Activated CD4-positive, alpha-beta T cell treated with anti-CD3 and anti-CD28 coated beads for 36 hours (primary cell): ENCODE measurements at regions of chr11 and their contacts with region 1.

Region 1: GRCh38 chr11:118689851-118690552 is 10.6 kb upstream of the TREH start:
- DNase-seq: peak; percentile 95
- ATAC-seq: peak; percentile 95
- H3K4me3 Mint-ChIP-seq: peak overlapping the region; percentile 65
- H3K27ac Mint-ChIP-seq: peak overlapping the region; percentile 84
- H3K4me1 Mint-ChIP-seq: peaks cover 46% of the 10 kb centered on the region
- H3K27me3 Mint-ChIP-seq: no peaks in the 10 kb centered on the region

Region 2: DNA sequence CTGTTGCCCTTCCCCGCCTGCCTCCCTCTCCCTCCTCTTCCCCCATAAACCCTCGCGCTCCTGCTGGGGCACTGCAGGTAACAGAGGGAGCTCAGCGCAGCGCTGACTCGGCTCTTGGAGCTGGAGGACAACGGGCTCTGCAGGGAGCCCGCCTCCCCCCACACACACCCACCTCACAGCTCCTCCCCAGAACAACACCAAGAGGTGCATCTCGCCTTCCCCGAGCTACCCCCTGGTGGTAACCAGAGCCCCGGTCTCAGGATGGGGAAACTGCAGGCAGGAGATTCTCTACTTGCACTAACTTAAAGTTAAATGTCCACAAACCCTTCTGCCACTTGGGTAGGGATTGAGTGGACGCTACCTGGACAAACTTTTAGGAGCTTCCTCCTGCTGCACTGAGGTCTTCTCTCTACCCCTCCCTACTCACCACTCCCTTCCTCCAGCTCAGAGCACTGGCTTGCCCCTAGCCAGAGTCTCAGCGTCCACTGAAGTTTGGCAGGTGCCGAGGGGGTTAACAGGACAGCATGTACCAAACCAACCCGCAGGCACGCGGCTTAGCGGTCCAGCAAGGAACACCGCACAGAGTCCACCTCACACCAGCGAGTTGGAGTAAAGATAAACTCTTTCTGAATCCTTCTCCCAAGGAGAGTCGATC is 533.3 kb before region 1 on chr11:
- CTCF ChIA-PET with region 1: no interaction called
- POLR2A ChIA-PET with region 1: no interaction called
- intact Hi-C with region 1: no loop called
- DNase-seq: peak; percentile 42
- ATAC-seq: peak; percentile 74
- H3K4me3 Mint-ChIP-seq: no peak overlapping the region
- H3K27ac Mint-ChIP-seq: no peak overlapping the region
- H3K4me1 Mint-ChIP-seq: peaks cover 6% of the 10 kb centered on the region
- H3K27me3 Mint-ChIP-seq: peaks cover 56% of the 10 kb centered on the region

Region 3: GRCh38 chr11:118448294-118448693 is 241.7 kb before region 1 on chr11:
- CTCF ChIA-PET with region 1: no interaction called
- POLR2A ChIA-PET with region 1: no interaction called
- intact Hi-C with region 1: loop called in 1 of 2 experiments (anchors 10 kb)
- DNase-seq: peak; percentile 10
- ATAC-seq: peak; percentile 64
- H3K4me3 Mint-ChIP-seq: no peak overlapping the region
- H3K27ac Mint-ChIP-seq: no peak overlapping the region
- H3K4me1 Mint-ChIP-seq: peaks cover 73% of the 10 kb centered on the region
- H3K27me3 Mint-ChIP-seq: no peaks in the 10 kb centered on the region

Region 4: GRCh38 chr11:118677977-118678376 is 12.0 kb before region 1 on chr11:
- CTCF ChIA-PET with region 1: interaction called, 5 read pairs
- POLR2A ChIA-PET with region 1: no interaction called
- intact Hi-C with region 1: loop called in 1 of 2 experiments (anchors 1 kb)
- DNase-seq: no peak
- ATAC-seq: no peak
- H3K4me3 Mint-ChIP-seq: no peak overlapping the region
- H3K27ac Mint-ChIP-seq: no peak overlapping the region
- H3K4me1 Mint-ChIP-seq: no peaks in the 10 kb centered on the region
- H3K27me3 Mint-ChIP-seq: no peaks in the 10 kb centered on the region

Region 5: GRCh38 chr11:118870396-118871345 is 180.7 kb after region 1 on chr11:
- CTCF ChIA-PET with region 1: interaction called, 8 read pairs
- POLR2A ChIA-PET with region 1: no interaction called
- intact Hi-C with region 1: loop called in 1 of 2 experiments (anchors 10 kb)
- DNase-seq: peak; percentile 61
- ATAC-seq: peak; percentile 70
- H3K4me3 Mint-ChIP-seq: peak overlapping the region; percentile 71
- H3K27ac Mint-ChIP-seq: peak overlapping the region; percentile 99
- H3K4me1 Mint-ChIP-seq: peaks cover 57% of the 10 kb centered on the region
- H3K27me3 Mint-ChIP-seq: no peaks in the 10 kb centered on the region

Region 6: DNA sequence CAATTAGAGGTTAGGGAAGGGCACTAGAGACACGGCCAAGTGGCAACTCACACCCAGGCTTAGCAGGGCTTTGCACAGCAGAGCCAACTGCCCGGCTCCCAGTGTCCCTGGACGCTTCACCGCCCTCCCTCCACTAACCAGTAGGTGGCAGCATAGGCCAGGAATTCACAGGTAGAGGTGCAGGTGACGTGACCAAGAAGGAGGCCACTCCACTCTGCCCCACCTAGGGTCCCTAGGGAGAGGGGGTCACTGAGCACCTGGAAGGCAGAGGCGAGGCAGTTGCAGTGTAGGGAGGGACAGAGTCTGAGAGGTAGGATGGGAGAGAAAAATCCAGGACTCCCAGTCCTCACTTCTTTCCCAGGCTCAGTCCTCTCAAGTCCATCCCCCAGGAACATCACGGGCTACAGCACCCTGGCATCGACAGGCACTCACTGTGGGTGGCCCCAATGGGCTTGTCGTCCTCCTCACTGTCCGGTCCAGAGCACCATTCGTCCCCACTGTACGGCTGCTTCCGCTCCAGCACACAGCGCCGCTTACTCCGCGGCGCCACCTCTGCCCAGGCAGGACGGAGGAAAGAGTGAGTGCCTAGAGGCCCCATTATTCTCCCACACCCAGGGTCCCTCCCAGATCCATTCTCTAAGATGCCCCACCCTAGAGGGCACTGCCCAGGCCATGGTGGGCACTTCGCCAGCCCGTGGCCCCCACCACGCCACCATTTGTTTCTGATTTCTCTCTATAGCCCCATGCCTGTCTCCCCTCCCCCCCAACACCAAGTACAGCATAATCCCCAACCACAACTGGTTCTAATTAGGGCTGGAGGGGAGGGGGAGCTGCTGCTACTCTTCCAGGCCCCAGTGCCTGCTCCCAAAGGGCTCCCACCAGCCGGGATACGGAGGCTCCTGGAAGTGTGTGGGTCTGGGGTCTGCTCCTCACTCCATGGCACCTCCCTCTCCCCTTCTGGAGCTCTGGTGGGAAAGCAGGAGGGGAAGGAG is 217.3 kb after region 1 on chr11:
- CTCF ChIA-PET with region 1: interaction called, 6 read pairs
- POLR2A ChIA-PET with region 1: no interaction called
- intact Hi-C with region 1: loop called in 1 of 2 experiments (anchors 1 kb)
- DNase-seq: peak; percentile 92
- ATAC-seq: peak; percentile 66
- H3K4me3 Mint-ChIP-seq: no peak overlapping the region
- H3K27ac Mint-ChIP-seq: peak overlapping the region; percentile 67
- H3K4me1 Mint-ChIP-seq: peaks cover 48% of the 10 kb centered on the region
- H3K27me3 Mint-ChIP-seq: no peaks in the 10 kb centered on the region